Cardiac septum (tissue), 1 donor: ENCODE measurements at regions of chrX and their contacts with region 1.

Region 1: DNA sequence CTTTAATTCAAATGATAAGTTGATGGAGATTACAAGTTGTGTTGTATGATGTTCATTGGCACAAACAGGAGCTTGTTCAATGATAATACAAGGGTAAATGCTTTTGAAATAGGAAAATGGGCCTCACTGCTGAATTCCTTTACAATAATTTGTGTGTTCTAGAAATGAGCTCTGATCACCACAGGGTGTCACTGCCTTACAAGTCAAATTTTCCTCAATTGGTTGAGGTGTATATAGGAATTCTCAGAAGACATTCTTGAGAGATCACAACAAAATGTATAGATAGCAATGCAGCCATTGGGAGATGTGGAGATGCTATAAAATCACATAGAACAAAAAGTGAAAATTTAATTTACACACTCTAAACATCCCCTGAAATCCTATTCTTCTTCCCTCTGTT is 49.6 kb downstream of the KLF8 start:
- DNase-seq: no peak

Region 2: GRCh38 chrX:55867181-55867651 is 414.6 kb before region 1 on chrX:
- intact Hi-C with region 1: no loop called
- DNase-seq: no peak

Region 3: DNA sequence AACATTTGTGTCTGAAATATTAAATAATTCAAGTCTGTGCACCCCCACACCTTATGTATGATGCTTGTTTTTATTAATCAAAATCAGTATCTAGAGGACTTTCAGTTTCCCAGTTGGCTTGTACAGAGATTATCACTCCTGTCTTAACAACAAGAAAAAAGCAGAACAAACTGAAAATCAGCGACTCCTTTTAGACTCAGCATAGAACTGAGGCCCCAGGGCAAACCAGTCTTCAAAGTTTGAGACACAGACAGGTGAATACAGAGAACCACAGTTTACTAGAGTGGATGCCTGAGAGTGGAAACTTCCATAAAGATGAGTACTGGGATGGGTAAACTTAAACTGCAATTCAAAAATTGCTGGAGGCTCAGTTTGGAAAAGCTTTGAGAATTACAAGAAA is 192.4 kb before region 1 on chrX:
- intact Hi-C with region 1: no loop called
- DNase-seq: no peak

Region 4: DNA sequence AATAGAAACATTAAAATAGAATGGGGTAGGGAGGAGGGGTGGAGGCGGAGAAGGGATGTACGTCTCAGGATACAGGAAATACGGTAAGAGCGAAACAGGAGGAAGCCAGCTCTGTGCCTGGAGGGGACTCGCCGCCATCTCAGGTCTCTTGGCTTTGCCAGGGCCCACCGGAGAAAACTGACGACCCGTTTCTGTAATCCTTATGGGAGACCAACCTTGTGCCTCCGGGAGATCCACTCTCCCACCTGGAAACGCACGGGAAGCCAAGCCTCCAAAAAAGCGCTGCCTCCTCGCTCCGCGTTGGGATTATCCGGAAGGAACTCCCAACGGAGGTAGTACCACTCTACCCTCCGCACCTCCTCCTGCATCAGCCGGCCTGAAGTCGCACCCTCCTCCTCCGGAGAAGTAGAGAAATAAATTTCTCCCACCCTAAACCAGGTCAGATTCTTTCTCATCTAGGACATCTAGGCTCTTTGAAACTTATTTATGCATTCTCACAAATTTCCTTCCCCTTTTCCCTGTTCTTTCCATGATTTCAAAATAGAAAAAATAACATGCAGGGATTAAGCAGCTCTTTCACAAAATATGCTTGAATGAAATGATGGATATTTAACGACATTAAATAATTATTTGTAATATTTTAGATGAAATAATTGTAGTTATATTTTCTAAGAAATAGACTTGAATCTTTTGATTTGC is 447.5 kb after region 1 on chrX and contains the start of gene NBDY:
- intact Hi-C with region 1: loop called (anchors 5 kb)
- DNase-seq: no peak
- total RNA-seq, gene NBDY: 29.9 TPM